IMR-90 (cell line): ENCODE measurements at regions of chr14 and their contacts with region 1.

Region 1: GRCh38 chr14:65070455-65070976 is 31.8 kb downstream of the MAX start:
- DNase-seq: peak; percentile 7
- ATAC-seq: peak; percentile 33
- H3K4me3 ChIP-seq: no peak overlapping the region
- H3K27ac ChIP-seq: no peak overlapping the region
- H3K4me1 ChIP-seq: no peaks in the 10 kb centered on the region
- H3K27me3 ChIP-seq: no peaks in the 10 kb centered on the region
- CTCF ChIP-seq: no peak
- POLR2A ChIP-seq: no peak
- RAD21 ChIP-seq: no peak

Region 2: DNA sequence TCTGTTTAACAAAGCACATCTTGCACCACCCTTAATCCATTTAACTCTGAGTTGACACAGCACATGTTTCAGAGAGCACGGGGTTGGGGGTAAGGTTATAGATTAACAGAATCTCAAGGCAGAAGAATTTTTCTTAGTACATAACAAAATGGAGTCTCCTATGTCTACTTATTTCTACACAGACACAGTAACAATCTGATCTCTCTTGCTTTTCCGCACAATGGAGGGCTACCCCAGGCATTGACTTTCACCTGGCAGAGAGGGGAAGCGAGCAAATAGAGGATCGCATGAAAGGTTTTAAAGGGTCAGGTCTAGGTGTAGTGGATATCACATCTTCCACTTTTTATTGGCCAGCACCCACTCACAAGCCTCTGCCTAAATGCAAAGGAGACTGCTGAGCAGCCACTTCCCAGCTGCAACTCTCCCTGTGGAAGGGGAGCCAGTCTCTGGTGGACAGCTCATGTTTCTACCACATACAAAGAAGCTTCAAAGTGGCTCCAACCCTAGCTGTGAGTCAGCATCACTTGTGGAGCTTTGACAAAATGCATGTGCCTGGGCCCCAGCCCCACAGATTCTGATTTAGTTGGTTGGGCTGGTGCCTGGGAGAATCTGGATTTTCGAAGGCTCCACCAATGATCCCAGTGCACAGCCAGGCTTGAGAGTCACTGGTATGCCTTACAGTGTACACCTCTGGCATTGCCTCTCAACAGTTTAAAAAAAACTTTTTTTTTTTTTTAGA is 91.0 kb before region 1 on chr14:
- CTCF ChIA-PET with region 1: no interaction called
- POLR2A ChIA-PET with region 1: no interaction called
- dilution Hi-C with region 1: no loop called
- in situ Hi-C with region 1: no loop called
- intact Hi-C with region 1: no loop called
- DNase-seq: peak; percentile 77
- ATAC-seq: peak; percentile 86
- H3K4me3 ChIP-seq: no peak overlapping the region
- H3K27ac ChIP-seq: no peak overlapping the region
- H3K4me1 ChIP-seq: peaks cover 3% of the 10 kb centered on the region; the same call in 1 of the 2 replicates
- H3K27me3 ChIP-seq: peaks cover 16% of the 10 kb centered on the region
- CTCF ChIP-seq: no peak
- POLR2A ChIP-seq: no peak
- RAD21 ChIP-seq: no peak

Region 3: DNA sequence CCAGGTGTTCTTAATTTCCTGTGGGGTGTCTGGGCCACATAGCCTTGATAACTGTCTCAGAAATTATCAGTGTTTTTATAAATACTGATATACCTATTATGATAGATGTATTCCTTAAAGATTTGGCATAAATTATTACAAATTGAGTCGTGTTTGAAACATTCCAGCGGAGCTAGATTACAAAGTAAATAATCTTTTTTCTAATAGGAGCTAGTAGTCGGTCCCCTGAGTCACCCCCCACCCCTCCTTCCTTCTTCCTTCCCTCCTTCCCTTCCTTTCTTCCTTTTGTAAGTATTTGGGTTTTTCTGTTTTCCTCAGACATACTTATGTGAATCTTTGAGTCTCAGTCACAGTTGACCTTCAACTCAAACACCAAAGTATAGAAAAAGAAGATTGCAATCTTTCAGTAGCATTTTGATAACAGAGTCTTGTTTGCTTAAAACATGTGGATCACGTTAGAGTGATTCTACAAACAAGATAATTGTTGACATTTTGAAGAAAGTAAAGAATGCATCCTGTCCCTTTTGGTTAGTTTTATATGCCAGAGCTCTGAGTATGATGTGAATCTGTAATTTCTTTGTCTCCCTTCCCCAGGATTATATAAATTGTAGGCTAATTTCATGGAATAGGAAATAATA is 606.0 kb after region 1 on chr14:
- CTCF ChIA-PET with region 1: no interaction called
- POLR2A ChIA-PET with region 1: interaction called, 14 read pairs
- dilution Hi-C with region 1: no loop called
- in situ Hi-C with region 1: no loop called
- intact Hi-C with region 1: no loop called
- DNase-seq: peak; percentile 3
- ATAC-seq: peak; percentile 35
- H3K4me3 ChIP-seq: no peak overlapping the region
- H3K27ac ChIP-seq: no peak overlapping the region
- H3K4me1 ChIP-seq: peaks cover 3% of the 10 kb centered on the region; the same call in 1 of the 2 replicates
- H3K27me3 ChIP-seq: no peaks in the 10 kb centered on the region
- CTCF ChIP-seq: no peak
- POLR2A ChIP-seq: no peak
- RAD21 ChIP-seq: no peak